ENCODE measurements at regions of chr20 and their contacts with region 1.

Region 1: DNA sequence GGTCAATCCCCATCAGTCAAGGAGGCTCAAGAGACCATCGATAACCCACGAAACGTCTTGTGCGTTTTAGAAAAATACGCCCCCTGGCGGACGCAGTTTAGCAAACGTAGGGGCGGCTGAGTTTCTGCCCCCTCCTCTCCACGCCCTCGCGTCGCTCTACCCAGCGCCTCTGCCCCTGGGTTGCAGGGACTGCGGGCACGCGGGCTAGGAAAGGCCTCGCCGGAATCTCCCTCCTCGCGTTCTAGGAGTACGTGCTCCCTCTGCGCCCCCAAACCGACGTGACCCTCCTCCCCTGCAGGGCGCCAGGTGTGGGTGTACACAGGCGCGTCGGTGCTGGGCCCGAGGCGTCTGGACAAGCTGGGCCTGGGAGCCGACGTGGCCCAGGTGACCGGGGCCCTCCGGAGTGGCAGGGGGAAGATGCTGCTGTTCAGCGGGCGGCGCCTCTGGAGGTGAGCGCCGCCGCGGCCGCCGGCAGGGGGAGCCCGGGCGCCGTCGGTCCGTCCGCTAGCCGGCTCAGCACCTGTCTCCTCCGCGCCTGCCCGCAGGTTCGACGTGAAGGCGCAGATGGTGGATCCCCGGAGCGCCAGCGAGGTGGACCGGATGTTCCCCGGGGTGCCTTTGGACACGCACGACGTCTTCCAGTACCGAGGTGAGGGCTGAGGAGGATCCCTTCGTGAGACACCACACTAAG is 5.3 kb downstream of the MMP9 start:
- DNase-seq: peak; percentile 31
- H3K4me3 ChIP-seq: no peak overlapping the region
- H3K27ac ChIP-seq: no peak overlapping the region
- H3K4me1 ChIP-seq: no peaks in the 10 kb centered on the region
- H3K27me3 ChIP-seq: peaks cover 39 to 46% of the 10 kb centered on the region in 2 experiments
- CTCF ChIP-seq: peak; percentile 74 to 85
- POLR2A ChIP-seq: no peak

Region 2: GRCh38 chr20:45998761-45999160 is 15.2 kb before region 1 on chr20:
- CTCF ChIA-PET with region 1: interaction called, 12 read pairs
- POLR2A ChIA-PET with region 1: no interaction called
- dilution Hi-C with region 1: no loop called
- intact Hi-C with region 1: no loop called
- DNase-seq: no peak
- H3K4me3 ChIP-seq: no peak overlapping the region
- H3K27ac ChIP-seq: no peak overlapping the region
- H3K4me1 ChIP-seq: no peaks in the 10 kb centered on the region
- H3K27me3 ChIP-seq: peaks cover 12 to 19% of the 10 kb centered on the region in 2 experiments
- CTCF ChIP-seq: no peak
- POLR2A ChIP-seq: no peak

Region 3: DNA sequence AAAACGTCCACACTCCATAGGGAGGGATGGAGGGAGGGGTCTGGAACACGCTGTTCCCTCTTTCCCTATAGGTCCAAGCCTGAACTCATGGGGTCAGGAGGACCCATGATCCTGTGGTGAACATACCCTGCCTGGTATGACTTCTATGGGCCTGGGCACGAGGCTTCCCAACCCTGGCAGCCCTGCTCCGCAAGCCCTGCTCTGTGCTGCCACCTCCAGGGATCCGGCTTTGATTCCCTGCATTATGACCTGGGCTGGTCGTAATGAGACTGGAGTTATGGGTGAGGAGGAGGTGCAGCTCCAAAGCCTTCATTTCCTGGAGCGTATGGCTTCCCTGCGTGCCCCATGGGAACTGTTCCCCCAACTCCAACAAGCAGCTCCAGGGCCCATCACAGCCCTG is 239.4 kb after region 1 on chr20:
- CTCF ChIA-PET with region 1: no interaction called
- POLR2A ChIA-PET with region 1: no interaction called
- dilution Hi-C with region 1: no loop called
- intact Hi-C with region 1: no loop called
- DNase-seq: no peak
- H3K4me3 ChIP-seq: no peak overlapping the region
- H3K27ac ChIP-seq: no peak overlapping the region
- H3K4me1 ChIP-seq: peaks cover 5% of the 10 kb centered on the region
- H3K27me3 ChIP-seq: peaks cover 12 to 15% of the 10 kb centered on the region in 2 experiments
- CTCF ChIP-seq: no peak
- POLR2A ChIP-seq: no peak

Region 4: DNA sequence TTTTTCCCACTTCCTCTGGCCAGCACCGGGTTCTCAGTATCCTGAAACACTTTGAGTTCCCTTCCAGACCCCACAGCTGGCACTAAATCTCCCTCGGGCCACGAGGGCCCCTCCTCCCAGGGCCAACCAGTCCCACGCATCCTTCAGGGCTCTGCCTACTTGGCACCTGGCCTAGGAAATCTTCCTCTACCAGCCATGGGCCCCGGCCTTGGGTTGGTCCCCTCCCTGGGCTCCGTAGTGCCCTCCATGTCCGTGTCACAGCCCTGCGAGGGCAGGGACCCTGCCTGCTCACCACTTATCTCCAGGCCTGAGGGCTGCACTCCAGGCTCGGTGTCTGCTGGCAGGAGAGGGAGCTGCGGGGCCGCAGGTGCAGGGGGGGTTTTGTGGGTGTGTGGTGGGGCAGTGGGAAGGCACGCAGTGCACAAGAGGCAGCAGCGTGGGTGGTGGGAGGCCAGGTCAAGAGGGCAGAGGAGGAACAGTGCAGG is 343.1 kb after region 1 on chr20:
- CTCF ChIA-PET with region 1: no interaction called
- POLR2A ChIA-PET with region 1: no interaction called
- dilution Hi-C with region 1: no loop called
- intact Hi-C with region 1: no loop called
- DNase-seq: peak; percentile 10
- H3K4me3 ChIP-seq: no peak overlapping the region
- H3K27ac ChIP-seq: no peak overlapping the region
- H3K4me1 ChIP-seq: no peaks in the 10 kb centered on the region
- H3K27me3 ChIP-seq: no peaks in the 10 kb centered on the region
- CTCF ChIP-seq: no peak
- POLR2A ChIP-seq: no peak